Dendritic cell treated with granulocyte-macrophage colony-stimulating factor and Interleukin-4, amounts not matched to agents 40 ng/mL and 50 ng/mL, for 4 days (primary cell): ENCODE measurements at regions of chr6 and their contacts with region 1.

Region 1: DNA sequence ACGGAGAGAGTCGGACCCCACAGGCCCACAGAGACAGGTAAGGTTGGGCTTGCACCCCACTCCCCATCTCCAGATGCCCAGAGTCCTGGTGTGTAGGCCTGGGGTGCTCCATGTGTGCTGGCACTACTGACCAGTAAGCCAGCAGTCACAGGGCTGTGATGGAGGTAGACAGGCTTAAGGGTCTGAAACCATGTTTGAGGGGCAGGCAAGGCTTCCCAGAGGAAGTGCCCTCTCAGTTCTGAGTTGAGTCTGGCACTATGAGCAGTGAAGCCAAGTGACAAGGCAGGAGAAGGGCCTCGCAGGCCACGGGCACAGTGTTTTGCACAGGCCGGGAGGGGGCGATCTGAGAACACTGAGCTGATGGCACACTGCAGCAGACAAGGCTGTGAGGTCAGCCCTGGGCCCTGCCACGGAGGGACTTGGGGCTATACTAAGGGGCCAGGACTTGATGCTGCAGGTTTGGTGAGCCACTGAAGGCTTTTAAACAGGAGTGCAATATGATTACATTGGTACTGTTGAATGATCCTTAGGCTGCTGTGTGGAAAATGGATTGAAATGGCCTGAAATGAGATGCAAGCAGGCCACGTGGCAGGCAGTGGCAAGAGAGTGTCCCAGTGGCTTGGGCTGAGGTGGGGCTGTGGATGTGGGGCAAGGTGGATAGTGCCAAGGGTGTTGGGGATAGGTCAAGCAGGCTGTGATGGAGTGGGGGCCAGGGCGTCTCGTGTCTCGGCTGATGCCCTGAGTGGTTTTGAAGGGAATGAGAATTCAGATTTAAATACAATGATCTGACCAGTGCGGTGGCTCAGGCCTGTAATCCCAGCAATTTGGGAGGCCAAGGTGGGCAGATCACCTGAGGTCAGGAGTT is 20.3 kb downstream of the TTBK1 start:
- H3K4me3 Mint-ChIP-seq: no peak overlapping the region
- H3K27ac Mint-ChIP-seq: no peak overlapping the region
- H3K4me1 Mint-ChIP-seq: peaks cover 7% of the 10 kb centered on the region
- H3K27me3 Mint-ChIP-seq: peaks cover 22% of the 10 kb centered on the region

Region 2: DNA sequence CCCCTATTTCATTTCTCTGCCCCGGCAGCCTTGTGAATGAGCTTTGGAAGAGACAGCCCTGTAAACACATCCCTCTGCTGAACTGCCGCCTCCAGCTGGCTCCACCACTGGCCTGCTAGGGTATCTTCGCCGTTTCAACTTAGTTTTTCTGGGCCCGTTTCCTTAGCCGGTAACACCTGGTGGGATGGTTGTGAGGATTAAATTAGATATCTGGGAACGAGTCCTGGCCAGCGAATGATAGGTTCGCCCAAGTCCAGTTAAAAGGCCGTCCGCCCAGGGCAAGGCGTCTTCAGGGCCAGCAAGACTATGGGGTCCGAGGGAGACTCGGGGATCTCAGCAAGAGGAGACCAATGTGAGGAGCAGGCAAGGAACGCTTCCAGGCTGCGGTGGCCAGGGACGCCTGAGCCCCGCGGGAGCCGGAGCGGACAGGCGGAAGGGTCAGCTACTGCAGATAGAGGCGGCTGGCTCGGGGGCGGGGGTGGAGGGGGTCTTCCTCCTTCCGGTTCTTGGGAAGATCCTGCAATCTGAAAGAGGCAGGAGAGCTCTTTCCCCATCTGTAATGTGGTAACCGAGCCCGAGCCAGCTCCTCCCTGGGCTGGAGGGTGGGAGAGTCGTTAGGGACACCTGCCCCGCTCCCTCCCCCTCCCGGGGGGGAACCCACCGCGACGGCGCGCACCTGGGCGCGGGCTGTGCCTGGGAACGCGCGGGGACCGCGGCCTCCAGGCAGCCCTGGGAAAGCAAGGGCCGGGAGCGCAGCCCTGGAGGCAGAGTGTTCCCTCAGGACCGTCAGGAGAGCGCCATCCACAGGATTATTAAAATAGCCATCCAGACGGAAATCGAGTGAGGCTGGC is 352.1 kb before region 1 on chr6:
- intact Hi-C with region 1: no loop called
- H3K4me3 Mint-ChIP-seq: peak overlapping the region; percentile 4
- H3K27ac Mint-ChIP-seq: no peak overlapping the region
- H3K4me1 Mint-ChIP-seq: peaks cover 6% of the 10 kb centered on the region
- H3K27me3 Mint-ChIP-seq: peaks cover 21% of the 10 kb centered on the region

Region 3: GRCh38 chr6:43247113-43247999 is 16.2 kb before region 1 on chr6:
- intact Hi-C with region 1: no loop called
- H3K4me3 Mint-ChIP-seq: peak overlapping the region; percentile 75
- H3K27ac Mint-ChIP-seq: peak overlapping the region; percentile 64
- H3K4me1 Mint-ChIP-seq: peaks cover 27% of the 10 kb centered on the region
- H3K27me3 Mint-ChIP-seq: peaks cover 32% of the 10 kb centered on the region

Region 4: GRCh38 chr6:43302126-43302525 is 38.6 kb after region 1 on chr6:
- intact Hi-C with region 1: no loop called
- H3K4me3 Mint-ChIP-seq: no peak overlapping the region
- H3K27ac Mint-ChIP-seq: no peak overlapping the region
- H3K4me1 Mint-ChIP-seq: peaks cover 7% of the 10 kb centered on the region
- H3K27me3 Mint-ChIP-seq: peaks cover 20% of the 10 kb centered on the region

Region 5: GRCh38 chr6:43318011-43318410 is 54.5 kb after region 1 on chr6:
- intact Hi-C with region 1: no loop called
- H3K4me3 Mint-ChIP-seq: no peak overlapping the region
- H3K27ac Mint-ChIP-seq: no peak overlapping the region
- H3K4me1 Mint-ChIP-seq: peaks cover 27% of the 10 kb centered on the region
- H3K27me3 Mint-ChIP-seq: no peaks in the 10 kb centered on the region

Region 6: DNA sequence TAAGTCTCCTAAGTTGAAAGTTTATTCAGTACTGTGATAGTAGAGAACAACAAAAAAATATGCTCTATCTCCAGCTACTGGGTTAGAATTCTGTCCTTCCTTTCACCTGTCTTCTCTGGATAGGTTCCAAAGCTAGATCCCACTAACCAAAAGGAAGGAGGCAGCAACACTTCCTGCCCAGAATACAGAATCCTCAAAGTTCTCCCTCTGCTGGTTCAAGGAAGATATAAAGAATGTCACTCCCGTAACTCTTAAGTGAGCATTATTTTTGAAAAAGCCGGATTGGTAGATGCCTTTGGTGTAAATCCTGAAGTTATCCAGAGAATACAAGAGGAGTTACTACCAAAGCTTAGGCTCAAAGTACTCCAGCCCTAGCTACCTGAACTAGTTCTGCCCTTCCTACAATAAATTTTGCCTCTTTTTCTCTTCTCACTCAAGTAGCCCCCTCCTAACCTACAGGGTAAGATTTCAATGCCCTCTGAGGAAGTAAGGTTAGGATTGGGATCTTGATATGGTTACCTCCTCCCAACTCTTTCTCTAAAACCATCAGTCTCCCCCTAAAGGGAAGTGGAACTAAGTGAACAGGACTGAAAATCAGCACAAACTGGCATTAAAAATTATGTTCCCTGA is 71.0 kb after region 1 on chr6:
- intact Hi-C with region 1: loop called (anchors 2 kb)
- H3K4me3 Mint-ChIP-seq: no peak overlapping the region
- H3K27ac Mint-ChIP-seq: no peak overlapping the region
- H3K4me1 Mint-ChIP-seq: peaks cover 40% of the 10 kb centered on the region
- H3K27me3 Mint-ChIP-seq: no peaks in the 10 kb centered on the region

Region 7: GRCh38 chr6:43402820-43403219 is 139.3 kb after region 1 on chr6:
- intact Hi-C with region 1: loop called (anchors 1 kb)
- H3K4me3 Mint-ChIP-seq: no peak overlapping the region
- H3K27ac Mint-ChIP-seq: no peak overlapping the region
- H3K4me1 Mint-ChIP-seq: no peaks in the 10 kb centered on the region
- H3K27me3 Mint-ChIP-seq: peaks cover 23% of the 10 kb centered on the region

Region 8: GRCh38 chr6:43506667-43507471 is 243.3 kb after region 1 on chr6:
- intact Hi-C with region 1: loop called (anchors 2 kb)
- H3K4me3 Mint-ChIP-seq: no peak overlapping the region
- H3K27ac Mint-ChIP-seq: no peak overlapping the region
- H3K4me1 Mint-ChIP-seq: peaks cover 38% of the 10 kb centered on the region
- H3K27me3 Mint-ChIP-seq: peaks cover 29% of the 10 kb centered on the region